HCT116 (cell line): ENCODE measurements at regions of chr16 and their contacts with region 1.

Region 1: DNA sequence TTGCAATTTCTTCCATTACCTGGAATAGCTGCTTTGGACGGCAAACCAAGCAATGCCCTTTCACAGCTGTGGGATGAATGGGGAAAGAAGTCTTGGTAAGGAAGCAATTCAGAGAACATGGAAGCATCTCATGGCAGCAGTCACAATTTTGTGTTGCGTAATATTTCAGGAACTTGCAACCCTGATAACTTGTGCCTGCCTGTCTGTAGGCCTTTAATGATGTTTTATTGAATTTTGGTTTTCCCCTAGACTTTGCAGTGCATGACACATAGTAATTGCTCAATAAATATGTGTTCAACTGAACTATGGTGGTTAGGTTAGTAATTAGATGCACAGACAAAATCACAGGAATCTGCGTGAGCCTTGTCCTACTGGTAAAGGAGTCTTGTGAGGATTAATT is 439.5 kb downstream of the WWOX start:
- DNase-seq: no peak
- ATAC-seq: no peak
- H3K4me3 ChIP-seq: no peak overlapping the region
- H3K27ac ChIP-seq: no peak overlapping the region
- H3K4me1 ChIP-seq: no peaks in the 10 kb centered on the region
- H3K27me3 ChIP-seq: no peaks in the 10 kb centered on the region
- CTCF ChIP-seq: no peak
- POLR2A ChIP-seq: no peak
- RAD21 ChIP-seq: no peak

Region 2: GRCh38 chr16:78353610-78354275 is 185.2 kb before region 1 on chr16:
- CTCF ChIA-PET with region 1: no interaction called
- POLR2A ChIA-PET with region 1: no interaction called
- RAD21 ChIA-PET with region 1: no interaction called
- intact Hi-C with region 1: no loop called
- DNase-seq: no peak
- ATAC-seq: no peak
- H3K4me3 ChIP-seq: no peak overlapping the region
- H3K27ac ChIP-seq: no peak overlapping the region
- H3K4me1 ChIP-seq: no peaks in the 10 kb centered on the region
- H3K27me3 ChIP-seq: no peaks in the 10 kb centered on the region
- CTCF ChIP-seq: no peak
- POLR2A ChIP-seq: no peak
- RAD21 ChIP-seq: no peak

Region 3: GRCh38 chr16:78584213-78584860 is 45.4 kb after region 1 on chr16:
- CTCF ChIA-PET with region 1: no interaction called
- POLR2A ChIA-PET with region 1: no interaction called
- RAD21 ChIA-PET with region 1: no interaction called
- intact Hi-C with region 1: loop called (anchors 10 kb)
- DNase-seq: no peak
- ATAC-seq: no peak
- H3K4me3 ChIP-seq: no peak overlapping the region
- H3K27ac ChIP-seq: no peak overlapping the region
- H3K4me1 ChIP-seq: no peaks in the 10 kb centered on the region
- H3K27me3 ChIP-seq: no peaks in the 10 kb centered on the region
- CTCF ChIP-seq: no peak
- POLR2A ChIP-seq: no peak
- RAD21 ChIP-seq: no peak

Region 4: GRCh38 chr16:78720416-78720815 is 181.5 kb after region 1 on chr16:
- CTCF ChIA-PET with region 1: no interaction called
- POLR2A ChIA-PET with region 1: no interaction called
- RAD21 ChIA-PET with region 1: no interaction called
- intact Hi-C with region 1: no loop called
- DNase-seq: no peak
- ATAC-seq: no peak
- H3K4me3 ChIP-seq: no peak overlapping the region
- H3K27ac ChIP-seq: no peak overlapping the region
- H3K4me1 ChIP-seq: no peaks in the 10 kb centered on the region
- H3K27me3 ChIP-seq: no peaks in the 10 kb centered on the region
- CTCF ChIP-seq: no peak
- POLR2A ChIP-seq: no peak
- RAD21 ChIP-seq: no peak